Tibial artery (tissue), 4 donors: ENCODE measurements at regions of chr5 and their contacts with region 1.

Region 1: DNA sequence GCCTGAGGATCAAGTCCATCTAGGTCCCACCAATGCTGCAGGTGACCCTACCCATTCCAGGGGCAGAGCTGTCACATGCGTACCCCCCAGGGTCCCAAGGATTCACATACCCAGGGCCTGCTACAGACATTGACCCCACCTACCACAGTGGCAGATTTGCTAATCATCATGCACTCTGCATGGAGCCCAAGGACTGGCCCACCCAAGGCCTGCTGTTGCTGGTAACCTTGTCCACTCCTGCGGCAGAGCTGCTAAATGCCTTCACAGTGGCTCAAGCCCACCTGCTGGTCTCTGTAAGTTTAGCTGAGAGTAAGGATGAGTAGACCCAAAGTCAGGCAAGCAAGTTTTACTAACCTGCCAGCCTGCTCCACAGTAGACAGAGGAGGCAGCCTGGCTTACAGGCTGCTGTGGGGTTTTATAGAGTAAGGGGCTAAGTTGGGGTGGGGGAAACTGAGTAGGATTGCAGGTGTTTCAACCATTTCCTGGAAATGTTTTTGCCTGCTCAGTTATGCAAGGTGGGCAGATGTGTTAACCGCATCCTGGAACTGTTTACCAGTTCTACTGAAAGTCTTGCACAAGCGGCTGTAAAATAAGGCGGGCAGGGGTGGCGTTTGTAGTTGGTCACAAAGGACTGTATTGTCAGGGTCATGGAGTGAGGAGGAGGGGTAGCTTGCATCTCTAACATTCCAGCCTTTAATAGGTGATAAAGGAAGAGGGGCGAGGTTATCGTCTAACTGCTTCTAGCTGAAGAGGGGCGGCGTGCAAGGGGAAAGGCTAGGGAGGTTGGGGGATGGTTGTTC is 2163.5 kb upstream of the WWC1 start:
- DNase-seq: no peak
- H3K4me3 ChIP-seq: no peak overlapping the region
- H3K27ac ChIP-seq: no peak overlapping the region
- H3K4me1 ChIP-seq: no peaks in the 10 kb centered on the region
- H3K27me3 ChIP-seq: no peaks in the 10 kb centered on the region
- CTCF ChIP-seq: no peak

Region 2: DNA sequence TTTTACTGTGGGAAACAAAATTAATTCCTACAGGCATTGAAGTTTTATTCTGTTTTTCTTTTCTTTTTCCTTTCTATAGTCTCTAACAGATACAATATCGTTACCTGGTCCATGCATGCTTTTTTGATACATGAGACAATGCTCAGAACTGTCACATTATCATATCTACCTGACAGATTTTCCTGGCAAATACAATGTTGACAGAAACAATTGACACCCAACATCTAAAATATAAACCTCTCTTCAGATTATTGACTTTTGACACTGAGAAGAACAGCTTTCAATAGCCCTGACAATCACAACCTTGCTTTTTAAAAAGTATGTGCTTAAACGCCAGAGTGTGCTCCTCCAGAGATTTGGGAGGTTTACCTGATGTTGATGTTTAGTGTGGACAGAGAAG is 171.1 kb before region 1 on chr5:
- intact Hi-C with region 1: loop called (anchors 5 kb)
- DNase-seq: no peak
- H3K4me3 ChIP-seq: no peak overlapping the region
- H3K27ac ChIP-seq: no peak overlapping the region
- H3K4me1 ChIP-seq: no peaks in the 10 kb centered on the region
- H3K27me3 ChIP-seq: no peaks in the 10 kb centered on the region
- CTCF ChIP-seq: no peak

Region 3: GRCh38 chr5:166117072-166118066 is 10.6 kb before region 1 on chr5:
- intact Hi-C with region 1: no loop called
- DNase-seq: no peak
- H3K4me3 ChIP-seq: no peak overlapping the region
- H3K27ac ChIP-seq: no peak overlapping the region
- H3K4me1 ChIP-seq: no peaks in the 10 kb centered on the region
- H3K27me3 ChIP-seq: no peaks in the 10 kb centered on the region
- CTCF ChIP-seq: no peak